ENCODE measurements at regions of chr7 and their contacts with region 1.

Region 1: GRCh38 chr7:137656227-137656849 is 190.4 kb downstream of the DGKI start:
- DNase-seq: peak; percentile 74
- H3K4me3 ChIP-seq: peak overlapping the region in 1 of 2 experiments; percentile 20; a peak in 1 of 4 replicates
- H3K27ac ChIP-seq: peak overlapping the region; percentile 55 to 92
- H3K4me1 ChIP-seq: peaks cover 26 to 27% of the 10 kb centered on the region in 2 experiments
- H3K27me3 ChIP-seq: no peaks in the 10 kb centered on the region
- CTCF ChIP-seq: peak; percentile 99
- EP300 ChIP-seq: no peak
- RAD21 ChIP-seq: peak; percentile 99

Region 2: GRCh38 chr7:137626469-137627067 is 29.8 kb before region 1 on chr7:
- CTCF ChIA-PET with region 1: interaction called, 55 read pairs
- POLR2A ChIA-PET with region 1: interaction called, 3 read pairs
- DNase-seq: peak; percentile 41
- H3K4me3 ChIP-seq: no peak overlapping the region; a peak in 1 of 4 replicates
- H3K27ac ChIP-seq: peak overlapping the region in 1 of 2 experiments; percentile 96; a peak in 2 of 4 replicates
- H3K4me1 ChIP-seq: peaks cover 0 to 24% of the 10 kb centered on the region in 2 experiments; a peak in 2 of 4 replicates
- H3K27me3 ChIP-seq: no peaks in the 10 kb centered on the region
- CTCF ChIP-seq: peak; percentile 77
- EP300 ChIP-seq: no peak
- RAD21 ChIP-seq: peak; percentile 67

Region 3: DNA sequence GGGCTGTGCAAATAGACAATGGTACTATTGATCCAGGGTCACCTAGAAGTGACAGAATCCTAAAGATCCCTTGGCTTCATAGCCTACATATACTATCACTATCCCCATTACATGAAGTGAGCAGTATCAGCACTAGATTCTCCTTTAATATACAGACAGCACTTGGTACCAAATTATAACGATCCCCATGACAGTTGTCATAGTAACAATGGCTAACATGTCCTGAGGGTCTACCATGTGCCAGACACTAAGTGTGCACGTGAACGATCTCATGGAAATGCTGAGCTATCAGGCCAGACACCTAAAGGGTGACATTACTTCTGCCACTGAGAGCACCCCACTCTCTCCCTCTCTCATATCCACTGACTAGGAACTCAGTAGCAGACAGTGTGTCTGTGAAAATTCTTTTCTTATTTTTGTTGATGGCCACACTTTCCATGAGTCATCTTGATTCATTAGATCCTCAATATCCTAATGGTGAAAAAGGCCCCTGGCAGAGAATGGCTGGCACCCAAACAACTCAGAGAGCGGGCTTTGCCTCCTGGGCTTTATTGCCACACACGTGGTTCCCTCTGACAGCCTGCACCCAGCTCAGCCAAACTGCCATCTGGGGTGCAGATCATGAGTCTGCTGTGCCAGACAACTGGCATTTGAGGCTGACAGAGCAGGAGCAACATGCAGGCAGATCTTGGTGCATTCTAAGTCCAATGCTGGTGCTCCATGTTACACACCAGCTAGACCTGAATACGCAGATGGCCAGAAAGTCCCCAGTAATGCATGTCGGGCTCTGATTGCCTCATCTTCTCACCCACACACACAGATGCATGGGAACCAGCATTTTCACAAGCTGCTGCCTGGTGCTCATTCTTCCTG is 14.1 kb after region 1 on chr7:
- CTCF ChIA-PET with region 1: interaction called, 97 read pairs
- POLR2A ChIA-PET with region 1: no interaction called
- DNase-seq: peak; percentile 44
- H3K4me3 ChIP-seq: no peak overlapping the region
- H3K27ac ChIP-seq: peak overlapping the region; percentile 73 to 82
- H3K4me1 ChIP-seq: peaks cover 30 to 35% of the 10 kb centered on the region in 2 experiments; a peak in 3 of 4 replicates
- H3K27me3 ChIP-seq: no peaks in the 10 kb centered on the region
- CTCF ChIP-seq: no peak
- EP300 ChIP-seq: peak in 1 of 2 experiments; percentile 73; a peak in 1 of 4 replicates
- RAD21 ChIP-seq: no peak

Region 4: DNA sequence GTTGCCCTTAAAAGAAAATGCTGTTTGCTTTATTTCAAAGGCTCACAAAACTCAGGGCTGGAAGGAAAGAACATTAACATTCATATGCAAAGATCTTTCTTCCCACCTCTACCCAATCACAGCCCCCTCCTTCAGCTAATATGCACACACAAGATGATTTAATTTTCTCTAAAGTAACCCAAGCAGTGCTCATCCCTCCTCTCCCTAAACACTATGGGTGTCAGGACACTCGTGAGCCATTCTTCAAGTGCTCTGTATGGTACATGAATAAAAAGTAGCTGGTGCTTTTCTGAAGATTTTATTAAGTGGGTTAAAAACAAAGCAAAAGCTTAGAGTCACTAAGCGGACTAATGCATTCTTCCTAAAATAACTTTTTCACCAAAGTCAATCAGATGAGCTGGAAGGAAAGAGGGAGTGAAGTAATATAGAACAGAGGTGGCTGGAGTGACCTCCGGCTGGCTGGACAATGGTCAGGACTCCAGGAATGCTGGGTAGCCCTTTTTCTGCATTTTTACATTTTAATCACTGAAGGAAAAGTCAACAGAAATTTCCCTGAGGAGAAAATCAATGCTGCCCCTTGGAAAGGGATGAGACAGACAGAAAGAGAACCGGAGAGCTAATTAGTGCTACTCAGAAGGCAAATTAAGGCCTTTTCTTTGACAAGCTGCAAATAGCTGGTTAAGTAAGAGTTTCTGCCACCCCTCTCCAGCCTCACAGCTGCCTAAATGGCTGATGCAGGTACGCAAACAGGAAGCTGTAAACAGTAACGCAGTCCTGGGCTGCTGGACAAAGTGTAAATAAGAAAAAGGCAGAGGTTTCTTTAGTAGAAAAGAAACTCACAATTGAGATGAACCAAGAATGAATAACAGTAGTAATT is 183.8 kb after region 1 on chr7:
- CTCF ChIA-PET with region 1: interaction called, 27 read pairs
- POLR2A ChIA-PET with region 1: no interaction called
- DNase-seq: no peak
- H3K4me3 ChIP-seq: no peak overlapping the region
- H3K27ac ChIP-seq: no peak overlapping the region
- H3K4me1 ChIP-seq: peaks cover 6 to 25% of the 10 kb centered on the region in 2 experiments; a peak in 3 of 4 replicates
- H3K27me3 ChIP-seq: no peaks in the 10 kb centered on the region
- CTCF ChIP-seq: no peak
- EP300 ChIP-seq: no peak
- RAD21 ChIP-seq: no peak

Region 5: GRCh38 chr7:137871170-137871915 is 215.0 kb after region 1 on chr7:
- CTCF ChIA-PET with region 1: interaction called, 12 read pairs
- POLR2A ChIA-PET with region 1: no interaction called
- DNase-seq: no peak
- H3K4me3 ChIP-seq: no peak overlapping the region
- H3K27ac ChIP-seq: no peak overlapping the region
- H3K4me1 ChIP-seq: peaks cover 19 to 32% of the 10 kb centered on the region in 2 experiments
- H3K27me3 ChIP-seq: no peaks in the 10 kb centered on the region
- CTCF ChIP-seq: no peak
- EP300 ChIP-seq: no peak
- RAD21 ChIP-seq: no peak

Region 6: GRCh38 chr7:137920637-137921399 is 264.5 kb after region 1 on chr7:
- CTCF ChIA-PET with region 1: interaction called, 14 read pairs
- POLR2A ChIA-PET with region 1: no interaction called
- DNase-seq: no peak
- H3K4me3 ChIP-seq: no peak overlapping the region
- H3K27ac ChIP-seq: no peak overlapping the region
- H3K4me1 ChIP-seq: peaks cover 9 to 15% of the 10 kb centered on the region in 2 experiments; a peak in 3 of 4 replicates
- H3K27me3 ChIP-seq: no peaks in the 10 kb centered on the region
- CTCF ChIP-seq: no peak
- EP300 ChIP-seq: no peak
- RAD21 ChIP-seq: no peak

Measured in SK-N-SH (cell line).